Thyroid gland (tissue), 4 donors: ENCODE measurements at regions of chr16 and their contacts with region 1.

Region 1: DNA sequence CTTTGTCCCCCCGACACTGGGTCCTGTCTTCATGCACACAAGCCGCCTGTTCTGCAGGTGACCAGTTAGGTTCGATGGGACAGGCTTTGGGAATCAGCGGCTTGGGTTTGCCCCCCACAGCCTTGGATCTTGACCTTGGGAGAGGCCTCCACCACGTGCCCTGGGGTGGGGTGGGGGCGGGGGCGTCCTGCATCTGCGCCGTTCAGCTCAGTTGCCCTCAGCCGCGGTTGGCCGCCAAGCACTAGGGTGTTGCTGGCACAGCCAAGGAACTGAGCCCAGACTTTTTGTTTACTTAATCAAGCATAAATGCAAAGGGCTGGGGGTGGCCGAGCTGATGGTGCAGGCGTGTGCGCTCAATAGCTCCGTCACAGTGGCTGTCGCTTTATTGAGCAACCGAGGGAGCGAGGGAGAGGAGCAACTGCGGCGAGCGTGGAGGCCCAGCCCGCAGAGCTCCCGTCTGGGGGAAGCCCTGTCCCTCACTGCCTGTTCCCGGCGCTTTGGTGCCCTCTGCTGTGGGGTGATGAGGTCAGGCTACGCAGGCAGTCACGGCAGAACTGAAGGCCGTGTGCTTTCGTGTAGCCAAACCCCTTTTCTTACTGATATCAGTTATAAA is 33.9 kb downstream of the JPH3 start:
- DNase-seq: peak; percentile 67 to 74
- H3K4me3 ChIP-seq: no peak overlapping the region
- H3K27ac ChIP-seq: no peak overlapping the region
- H3K4me1 ChIP-seq: peaks cover 9 to 13% of the 10 kb centered on the region in 2 donors
- H3K27me3 ChIP-seq: no peaks in the 10 kb centered on the region
- CTCF ChIP-seq: peak in 4 of 6 experiments; percentile 40 to 58 (median 50)
- POLR2A ChIP-seq: no peak

Region 2: GRCh38 chr16:87324411-87325275 is 311.5 kb before region 1 on chr16:
- intact Hi-C with region 1: loop called (anchors 10 kb)
- DNase-seq: peak; percentile 28 to 33
- H3K4me3 ChIP-seq: no peak overlapping the region
- H3K27ac ChIP-seq: no peak overlapping the region
- H3K4me1 ChIP-seq: peaks cover 3 to 10% of the 10 kb centered on the region in 2 donors
- H3K27me3 ChIP-seq: no peaks in the 10 kb centered on the region
- CTCF ChIP-seq: peak; percentile 54 to 80 (median 61)
- POLR2A ChIP-seq: no peak

Region 3: GRCh38 chr16:87416826-87417527 is 219.2 kb before region 1 on chr16:
- intact Hi-C with region 1: loop called (anchors 10 kb)
- DNase-seq: peak; percentile 49 to 50
- H3K4me3 ChIP-seq: no peak overlapping the region
- H3K27ac ChIP-seq: no peak overlapping the region
- H3K4me1 ChIP-seq: no peaks in the 10 kb centered on the region
- H3K27me3 ChIP-seq: no peaks in the 10 kb centered on the region
- CTCF ChIP-seq: peak; percentile 21 to 60 (median 46)
- POLR2A ChIP-seq: no peak